ENCODE measurements at regions of chr9 and their contacts with region 1.

Region 1: DNA sequence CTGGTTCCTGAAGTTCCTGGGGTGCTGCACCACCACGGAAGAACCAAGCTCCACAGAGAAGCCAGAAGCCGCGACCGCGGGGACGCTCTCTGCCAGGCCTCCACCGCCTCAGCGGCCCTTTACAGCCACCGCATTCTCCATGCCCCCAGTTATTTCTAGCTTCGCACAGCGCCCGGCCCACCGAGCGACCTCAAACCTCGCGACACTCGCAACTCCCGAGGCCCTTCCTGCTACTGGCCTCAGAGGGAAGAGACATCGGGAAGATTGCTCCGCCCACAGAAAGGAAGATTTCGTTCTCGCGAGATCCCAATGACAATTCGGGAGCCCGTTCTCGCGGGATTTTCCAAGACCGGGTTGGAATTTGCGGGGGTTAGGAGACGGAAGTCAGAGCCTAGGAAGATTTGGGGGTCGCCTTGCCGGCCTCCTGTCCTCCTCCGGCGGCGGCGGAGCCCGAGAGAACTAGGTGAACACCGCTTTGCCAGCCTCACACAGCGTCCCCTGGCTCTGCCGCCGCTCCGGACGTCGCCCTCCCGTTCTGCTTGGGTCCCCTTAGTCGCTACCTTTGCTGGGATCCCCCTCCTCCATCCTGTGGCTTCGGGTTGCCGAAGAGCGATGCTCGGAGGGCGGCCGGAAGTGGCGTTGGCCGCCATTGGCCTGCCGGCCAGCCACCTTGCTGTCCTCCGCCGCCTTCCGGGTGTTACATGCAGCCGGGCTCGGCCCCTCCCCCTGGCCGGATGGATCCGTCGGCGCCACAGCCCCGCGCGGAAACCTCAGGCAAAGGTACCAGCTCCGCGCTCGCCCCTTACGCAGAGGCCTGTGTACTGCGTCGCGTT is at the start of gene ERCC6L2:
- DNase-seq: peak; percentile 86 to 97 (median 92)
- ATAC-seq: peak; percentile 73
- H3K4me3 ChIP-seq: no peak within 1 kb of the TSS
- H3K4me3 Mint-ChIP-seq: no peak within 1 kb of the TSS
- H3K27ac ChIP-seq: no peak within 1 kb of the TSS
- H3K27ac Mint-ChIP-seq: no peak within 1 kb of the TSS
- H3K4me1 ChIP-seq: peaks cover 25% of the 10 kb centered on the region
- H3K4me1 Mint-ChIP-seq: peaks cover 38% of the 10 kb centered on the region
- H3K27me3 ChIP-seq: no peaks in the 10 kb centered on the region
- H3K27me3 Mint-ChIP-seq: no peaks in the 10 kb centered on the region
- CTCF ChIP-seq: no peak
- total RNA-seq, gene ERCC6L2: 32.9 to 33.4 TPM

Region 2: GRCh38 chr9:95317119-95317892 is 558.2 kb before region 1 on chr9 and contains the start of gene FANCC:
- CTCF ChIA-PET with region 1: no interaction called
- POLR2A ChIA-PET with region 1: no interaction called
- intact Hi-C with region 1: loop called (anchors 1 to 5 kb)
- DNase-seq: peak; percentile 71 to 93 (median 85)
- ATAC-seq: peak; percentile 79
- H3K4me3 ChIP-seq: peak within 1 kb of the TSS; percentile 87 to 99
- H3K4me3 Mint-ChIP-seq: peak within 1 kb of the TSS; percentile 94
- H3K27ac ChIP-seq: peak within 1 kb of the TSS; percentile 75 to 78
- H3K27ac Mint-ChIP-seq: peak within 1 kb of the TSS; percentile 91
- H3K4me1 ChIP-seq: peaks cover 12% of the 10 kb centered on the region
- H3K4me1 Mint-ChIP-seq: peaks cover 22% of the 10 kb centered on the region
- H3K27me3 ChIP-seq: no peaks in the 10 kb centered on the region
- H3K27me3 Mint-ChIP-seq: peaks cover 4% of the 10 kb centered on the region
- CTCF ChIP-seq: no peak
- total RNA-seq, gene FANCC: 4.2 to 6.1 TPM

Region 3: DNA sequence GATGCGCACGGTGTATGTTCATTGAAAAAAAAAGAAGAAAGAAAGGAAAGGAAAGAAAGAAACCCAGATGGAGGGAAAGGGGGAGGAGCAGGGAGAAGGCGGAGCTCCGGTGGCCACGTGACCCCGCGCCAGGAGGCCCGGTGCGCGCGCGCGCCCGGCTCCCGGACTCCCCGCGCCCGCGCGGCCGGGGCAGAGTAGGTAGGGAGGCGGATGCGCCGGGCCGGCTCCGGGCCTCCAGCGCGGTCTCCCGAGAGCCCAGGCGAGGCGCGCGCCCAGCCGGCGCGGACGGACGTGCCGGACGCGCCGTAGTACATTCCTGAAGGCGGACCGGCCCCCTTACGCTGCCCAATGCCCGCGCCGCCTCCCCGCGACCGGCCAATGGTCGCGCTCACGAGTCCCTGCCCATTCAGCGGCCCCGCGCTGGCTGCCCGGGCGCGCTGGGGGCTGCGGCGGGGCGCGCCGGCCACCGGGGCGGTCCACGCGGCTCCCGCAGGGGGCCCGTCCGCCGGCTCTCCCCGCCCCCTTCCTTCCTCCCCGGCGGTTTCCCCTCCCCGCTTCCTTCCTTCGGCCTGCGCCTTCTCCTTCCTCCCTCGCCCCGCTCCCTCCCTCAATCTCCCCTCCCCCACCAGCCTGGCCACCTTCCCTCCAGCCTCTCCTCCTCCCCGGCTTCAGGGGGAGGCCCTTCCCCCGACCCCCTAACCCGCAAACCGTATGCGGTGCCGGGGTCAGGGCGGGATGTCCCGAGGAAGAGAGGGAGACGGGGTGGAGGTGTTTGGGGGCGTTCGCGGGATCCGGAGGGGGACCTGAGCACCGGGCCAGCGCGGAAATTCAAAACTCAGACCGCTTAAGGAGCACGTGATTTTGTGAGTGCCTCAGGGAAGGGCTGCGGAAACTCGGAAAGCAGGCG is 364.6 kb before region 1 on chr9:
- CTCF ChIA-PET with region 1: no interaction called
- POLR2A ChIA-PET with region 1: interaction called, 4 read pairs
- intact Hi-C with region 1: loop called (anchors 1 to 2 kb)
- DNase-seq: peak; percentile 51 to 92 (median 81)
- ATAC-seq: peak; percentile 32
- H3K4me3 ChIP-seq: peak overlapping the region; percentile 60 to 72
- H3K4me3 Mint-ChIP-seq: peak overlapping the region; percentile 93
- H3K27ac ChIP-seq: peak overlapping the region; percentile 45
- H3K27ac Mint-ChIP-seq: peak overlapping the region; percentile 79
- H3K4me1 ChIP-seq: peaks cover 26% of the 10 kb centered on the region
- H3K4me1 Mint-ChIP-seq: peaks cover 41% of the 10 kb centered on the region
- H3K27me3 ChIP-seq: no peaks in the 10 kb centered on the region
- H3K27me3 Mint-ChIP-seq: peaks cover 22% of the 10 kb centered on the region
- CTCF ChIP-seq: no peak

Region 4: GRCh38 chr9:95822583-95823431 is 52.7 kb before region 1 on chr9:
- CTCF ChIA-PET with region 1: no interaction called
- POLR2A ChIA-PET with region 1: no interaction called
- intact Hi-C with region 1: no loop called
- DNase-seq: no peak
- ATAC-seq: no peak
- H3K4me3 ChIP-seq: no peak overlapping the region
- H3K4me3 Mint-ChIP-seq: no peak overlapping the region
- H3K27ac ChIP-seq: no peak overlapping the region
- H3K27ac Mint-ChIP-seq: no peak overlapping the region
- H3K4me1 ChIP-seq: no peaks in the 10 kb centered on the region
- H3K4me1 Mint-ChIP-seq: peaks cover 7% of the 10 kb centered on the region
- H3K27me3 ChIP-seq: no peaks in the 10 kb centered on the region
- H3K27me3 Mint-ChIP-seq: no peaks in the 10 kb centered on the region
- CTCF ChIP-seq: no peak

Region 5: GRCh38 chr9:95887926-95888497 is 12.5 kb after region 1 on chr9:
- CTCF ChIA-PET with region 1: interaction called, 5 read pairs
- POLR2A ChIA-PET with region 1: interaction called, 36 read pairs
- intact Hi-C with region 1: loop called in 1 of 2 experiments (anchors 1 kb)
- DNase-seq: peak in 2 of 9 experiments; percentile 39 to 69
- ATAC-seq: peak; percentile 80
- H3K4me3 ChIP-seq: peak overlapping the region in 1 of 2 experiments; percentile 25
- H3K4me3 Mint-ChIP-seq: peak overlapping the region; percentile 71
- H3K27ac ChIP-seq: peak overlapping the region; percentile 14 to 63
- H3K27ac Mint-ChIP-seq: peak overlapping the region; percentile 88
- H3K4me1 ChIP-seq: peaks cover 80% of the 10 kb centered on the region
- H3K4me1 Mint-ChIP-seq: peaks cover 79% of the 10 kb centered on the region
- H3K27me3 ChIP-seq: no peaks in the 10 kb centered on the region
- H3K27me3 Mint-ChIP-seq: no peaks in the 10 kb centered on the region
- CTCF ChIP-seq: no peak

Region 6: DNA sequence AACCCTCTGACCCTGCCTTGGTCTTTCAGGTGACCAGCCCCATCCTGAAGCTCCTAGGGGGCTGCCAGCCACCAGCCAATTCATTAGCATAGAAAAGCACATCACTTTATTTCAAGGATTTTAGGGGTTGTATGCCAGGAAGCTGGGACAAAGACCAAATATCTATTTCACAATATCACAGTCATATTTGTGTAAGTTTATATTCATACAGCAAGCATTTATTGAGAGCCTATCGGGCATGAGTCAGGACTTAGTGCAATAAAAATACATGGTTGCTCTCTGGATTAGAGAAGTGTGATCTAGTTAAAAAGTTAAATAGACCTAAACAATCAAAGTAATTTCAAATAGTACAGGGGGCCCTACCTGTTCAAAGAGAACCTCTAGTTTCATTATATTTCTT is 113.8 kb after region 1 on chr9:
- CTCF ChIA-PET with region 1: no interaction called
- POLR2A ChIA-PET with region 1: no interaction called
- intact Hi-C with region 1: no loop called
- DNase-seq: no peak
- ATAC-seq: no peak
- H3K4me3 ChIP-seq: no peak overlapping the region
- H3K4me3 Mint-ChIP-seq: no peak overlapping the region
- H3K27ac ChIP-seq: no peak overlapping the region
- H3K27ac Mint-ChIP-seq: no peak overlapping the region
- H3K4me1 ChIP-seq: no peaks in the 10 kb centered on the region
- H3K4me1 Mint-ChIP-seq: no peaks in the 10 kb centered on the region
- H3K27me3 ChIP-seq: no peaks in the 10 kb centered on the region
- H3K27me3 Mint-ChIP-seq: no peaks in the 10 kb centered on the region
- CTCF ChIP-seq: no peak

Region 7: DNA sequence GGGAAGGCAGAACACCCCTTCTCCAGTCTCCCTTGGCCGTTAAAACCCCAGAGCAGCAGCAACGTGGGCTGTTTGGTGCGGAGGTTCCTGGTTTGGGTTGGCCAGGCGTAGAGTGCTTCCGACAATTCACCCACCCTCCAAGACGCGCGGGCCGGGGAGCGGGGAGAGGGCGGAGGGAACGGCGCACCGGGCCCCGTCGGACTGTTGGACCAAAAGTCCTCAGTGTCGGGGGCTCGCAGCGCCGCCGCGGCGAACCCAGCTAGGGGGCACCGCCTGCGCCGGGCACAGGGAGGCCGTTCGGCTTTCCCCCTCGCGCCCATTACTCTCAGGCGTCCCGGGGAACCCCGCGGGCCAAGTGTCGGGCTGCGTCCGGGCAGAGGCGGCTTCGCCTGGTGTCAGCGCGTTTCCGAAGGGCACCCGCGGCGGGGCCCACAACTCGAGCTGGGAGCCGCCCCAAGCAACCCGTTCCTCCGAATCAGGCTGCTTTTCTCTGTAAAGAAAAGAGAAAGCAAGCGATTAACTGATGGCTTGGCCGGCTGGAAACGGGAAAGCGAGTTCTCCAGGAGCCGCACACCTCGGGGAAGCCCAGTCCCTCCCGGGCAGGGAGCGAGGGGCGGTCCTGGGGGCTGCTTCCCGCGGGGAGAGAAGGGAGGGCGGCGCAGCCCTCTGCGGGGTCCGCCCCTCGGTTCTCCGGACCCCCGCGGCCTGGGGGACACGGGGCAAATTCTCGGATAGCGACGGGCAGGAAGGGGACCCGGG is 145.4 kb after region 1 on chr9:
- CTCF ChIA-PET with region 1: interaction called, 4 read pairs
- POLR2A ChIA-PET with region 1: interaction called, 4 read pairs
- intact Hi-C with region 1: loop called (anchors 5 kb)
- DNase-seq: peak in 7 of 9 experiments; percentile 39 to 72 (median 61)
- ATAC-seq: peak; percentile 43
- H3K4me3 ChIP-seq: peak overlapping the region; percentile 61 to 69
- H3K4me3 Mint-ChIP-seq: peak overlapping the region; percentile 90
- H3K27ac ChIP-seq: peak overlapping the region; percentile 74 to 80
- H3K27ac Mint-ChIP-seq: peak overlapping the region; percentile 89
- H3K4me1 ChIP-seq: peaks cover 54% of the 10 kb centered on the region
- H3K4me1 Mint-ChIP-seq: peaks cover 74% of the 10 kb centered on the region
- H3K27me3 ChIP-seq: no peaks in the 10 kb centered on the region
- H3K27me3 Mint-ChIP-seq: no peaks in the 10 kb centered on the region
- CTCF ChIP-seq: no peak

Region 8: GRCh38 chr9:96654443-96655197 is 779.1 kb after region 1 on chr9:
- CTCF ChIA-PET with region 1: no interaction called
- POLR2A ChIA-PET with region 1: no interaction called
- intact Hi-C with region 1: loop called (anchors 10 kb)
- DNase-seq: peak; percentile 52 to 96 (median 77)
- ATAC-seq: peak; percentile 88
- H3K4me3 ChIP-seq: peak overlapping the region; percentile 57 to 71
- H3K4me3 Mint-ChIP-seq: peak overlapping the region; percentile 97
- H3K27ac ChIP-seq: peak overlapping the region; percentile 62 to 66
- H3K27ac Mint-ChIP-seq: peak overlapping the region; percentile 98
- H3K4me1 ChIP-seq: peaks cover 7% of the 10 kb centered on the region
- H3K4me1 Mint-ChIP-seq: peaks cover 22% of the 10 kb centered on the region
- H3K27me3 ChIP-seq: no peaks in the 10 kb centered on the region
- H3K27me3 Mint-ChIP-seq: no peaks in the 10 kb centered on the region
- CTCF ChIP-seq: no peak

Region 9: GRCh38 chr9:97632985-97633858 is 1757.7 kb after region 1 on chr9 and contains the starts of genes NCBP1 and TSTD2:
- CTCF ChIA-PET with region 1: no interaction called
- POLR2A ChIA-PET with region 1: no interaction called
- intact Hi-C with region 1: loop called in 1 of 2 experiments (anchors 10 kb)
- DNase-seq: peak; percentile 89 to 98 (median 95)
- ATAC-seq: peak; percentile 86
- H3K4me3 ChIP-seq: peak within 1 kb of the TSS; percentile 96 to 97
- H3K4me3 Mint-ChIP-seq: peak within 1 kb of the TSS; percentile 96
- H3K27ac ChIP-seq: peak within 1 kb of the TSS; percentile 88 to 97
- H3K27ac Mint-ChIP-seq: peak within 1 kb of the TSS; percentile 99
- H3K4me1 ChIP-seq: peaks cover 45% of the 10 kb centered on the region
- H3K4me1 Mint-ChIP-seq: peaks cover 57% of the 10 kb centered on the region
- H3K27me3 ChIP-seq: no peaks in the 10 kb centered on the region
- H3K27me3 Mint-ChIP-seq: no peaks in the 10 kb centered on the region
- CTCF ChIP-seq: no peak
- total RNA-seq, gene NCBP1: 50.7 to 58.5 TPM
- total RNA-seq, gene TSTD2: 34.3 to 40.8 TPM

Measured in CD8-positive, alpha-beta T cell (primary cell).